Mucosa of descending colon (tissue), 3 donors: ENCODE measurements at regions of chr9 and their contacts with region 1.

Region 1: GRCh38 chr9:98074115-98074990 is 17.8 kb downstream of the NANS start:
- DNase-seq: peak in 2 of 3 donors; percentile 77 to 84
- ATAC-seq: peak; percentile 42
- H3K4me3 ChIP-seq: no peak overlapping the region
- H3K4me1 ChIP-seq: peaks cover 47% of the 10 kb centered on the region
- CTCF ChIP-seq: peak; percentile 93

Region 2: GRCh38 chr9:96813607-96814006 is 1260.7 kb before region 1 on chr9:
- intact Hi-C with region 1: no loop called
- DNase-seq: no peak
- ATAC-seq: no peak
- H3K4me3 ChIP-seq: no peak overlapping the region
- H3K4me1 ChIP-seq: no peaks in the 10 kb centered on the region
- CTCF ChIP-seq: no peak

Region 3: GRCh38 chr9:98255578-98256296 is 181.4 kb after region 1 on chr9 and contains the start of gene TBC1D2:
- intact Hi-C with region 1: loop called in 1 of 2 experiments (anchors 10 kb)
- DNase-seq: peak; percentile 99
- ATAC-seq: peak; percentile 94
- H3K4me3 ChIP-seq: peak within 1 kb of the TSS; percentile 71
- H3K4me1 ChIP-seq: peaks cover 19% of the 10 kb centered on the region
- CTCF ChIP-seq: no peak
- total RNA-seq, gene TBC1D2: 19.5 to 33.5 (median 26.9) TPM